ENCODE measurements at regions of chr6 and their contacts with region 1.

Region 1: DNA sequence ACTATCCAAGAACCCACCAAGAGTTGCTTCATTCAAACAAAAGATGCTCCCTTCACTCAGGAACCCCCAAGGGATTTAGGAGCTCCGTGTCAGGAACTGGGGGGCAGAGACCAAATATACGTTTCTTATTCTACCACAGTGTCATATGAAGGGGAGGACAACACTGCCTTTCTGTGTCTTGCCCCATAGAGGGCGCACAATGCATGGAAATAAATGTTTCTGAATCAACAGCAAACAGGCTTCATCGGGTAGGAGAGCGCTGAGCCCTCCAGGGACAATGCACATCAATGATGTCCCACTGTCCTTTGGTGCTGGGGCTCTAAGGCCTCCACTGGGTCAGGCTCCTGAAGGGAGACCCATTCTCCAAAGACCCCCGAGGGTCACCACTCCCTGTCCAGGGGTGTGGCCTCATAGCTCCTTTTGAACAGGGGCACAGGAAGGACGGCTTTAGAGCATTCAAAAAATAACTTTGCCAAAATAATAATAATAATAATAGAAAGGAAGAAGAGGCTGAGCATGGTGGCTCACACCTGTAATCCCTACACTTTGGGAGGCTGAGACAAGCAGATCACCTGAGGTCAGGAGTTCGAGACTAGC is 31.1 kb downstream of the PLG start:
- DNase-seq: peak in 5 of 9 donors; percentile 0 to 15 (median 4)
- ATAC-seq: peak; percentile 31
- H3K4me3 ChIP-seq: no peak overlapping the region
- H3K4me3 Mint-ChIP-seq: no peak overlapping the region
- H3K27ac ChIP-seq: no peak overlapping the region
- H3K27ac Mint-ChIP-seq: no peak overlapping the region
- H3K4me1 ChIP-seq: no peaks in the 10 kb centered on the region
- H3K4me1 Mint-ChIP-seq: no peaks in the 10 kb centered on the region
- H3K27me3 ChIP-seq: no peaks in the 10 kb centered on the region
- H3K27me3 Mint-ChIP-seq: peaks cover 2 to 21% (median 9%) of the 10 kb centered on the region in 5 donors

Region 2: GRCh38 chr6:160766989-160767660 is 34.0 kb after region 1 on chr6:
- CTCF ChIA-PET with region 1: no interaction called
- POLR2A ChIA-PET with region 1: no interaction called
- intact Hi-C with region 1: loop called in 1 of 2 experiments (anchors 1 kb)
- DNase-seq: peak in 7 of 9 donors; percentile 8 to 50 (median 13)
- ATAC-seq: peak; percentile 61
- H3K4me3 ChIP-seq: no peak overlapping the region
- H3K4me3 Mint-ChIP-seq: peak overlapping the region; percentile 15 to 83 (median 63)
- H3K27ac ChIP-seq: no peak overlapping the region
- H3K27ac Mint-ChIP-seq: no peak overlapping the region
- H3K4me1 ChIP-seq: no peaks in the 10 kb centered on the region
- H3K4me1 Mint-ChIP-seq: peaks cover 0 to 9% (median 3%) of the 10 kb centered on the region in 7 donors
- H3K27me3 ChIP-seq: peaks cover 0 to 4% of the 10 kb centered on the region in 2 donors
- H3K27me3 Mint-ChIP-seq: peaks cover 25 to 54% (median 47%) of the 10 kb centered on the region in 5 donors

Region 3: DNA sequence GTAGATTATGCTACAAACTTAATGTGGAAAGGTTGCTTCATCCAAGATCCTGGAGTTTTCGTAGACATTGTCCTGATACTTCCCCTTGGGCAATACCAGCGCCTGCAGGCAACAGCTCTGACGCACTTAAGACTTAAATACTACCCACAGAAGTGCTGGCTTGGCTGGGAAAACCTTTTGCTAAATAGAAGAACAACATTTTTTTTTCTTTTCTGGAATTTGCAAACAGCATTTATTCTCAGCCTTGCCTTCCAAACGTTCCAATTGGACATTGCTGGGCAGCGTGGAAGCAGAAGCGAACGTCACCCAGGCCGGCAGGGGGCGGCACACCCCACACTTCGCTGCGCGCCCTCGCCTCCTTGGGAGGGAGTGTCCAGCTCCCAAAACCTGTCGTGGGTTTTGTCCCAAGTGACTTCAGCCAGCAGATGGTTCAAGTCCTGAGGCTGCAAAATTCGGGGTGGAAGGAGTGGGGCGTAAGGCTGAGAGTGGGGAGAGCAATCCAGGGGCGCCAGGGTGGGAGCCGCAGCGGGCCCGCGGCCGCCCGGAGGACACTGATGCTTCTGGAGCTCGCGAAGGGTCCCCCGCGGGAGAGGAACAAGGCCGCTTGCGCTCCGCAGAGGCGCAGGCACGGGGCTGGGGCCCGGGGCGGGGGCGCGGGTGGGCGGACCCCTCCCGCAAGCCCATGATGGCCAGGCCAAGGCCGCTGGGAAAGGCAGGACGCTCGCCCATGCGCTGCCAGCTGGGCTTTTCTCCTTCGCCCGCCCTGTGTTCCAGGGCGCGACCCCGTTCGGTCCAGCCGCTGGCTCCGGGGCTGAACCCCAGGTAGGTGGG is 197.6 kb after region 1 on chr6:
- CTCF ChIA-PET with region 1: no interaction called
- POLR2A ChIA-PET with region 1: no interaction called
- intact Hi-C with region 1: loop called in 1 of 2 experiments (anchors 5 kb)
- DNase-seq: peak in 8 of 9 donors; percentile 3 to 69 (median 40)
- ATAC-seq: peak; percentile 72
- H3K4me3 ChIP-seq: no peak overlapping the region
- H3K4me3 Mint-ChIP-seq: peak overlapping the region in 7 of 10 donors; percentile 16 to 62 (median 30)
- H3K27ac ChIP-seq: no peak overlapping the region
- H3K27ac Mint-ChIP-seq: no peak overlapping the region
- H3K4me1 ChIP-seq: no peaks in the 10 kb centered on the region
- H3K4me1 Mint-ChIP-seq: peaks cover 0 to 5% (median 0%) of the 10 kb centered on the region in 7 donors
- H3K27me3 ChIP-seq: peaks cover 0 to 5% of the 10 kb centered on the region in 2 donors
- H3K27me3 Mint-ChIP-seq: peaks cover 32 to 50% (median 47%) of the 10 kb centered on the region in 5 donors

Region 4: DNA sequence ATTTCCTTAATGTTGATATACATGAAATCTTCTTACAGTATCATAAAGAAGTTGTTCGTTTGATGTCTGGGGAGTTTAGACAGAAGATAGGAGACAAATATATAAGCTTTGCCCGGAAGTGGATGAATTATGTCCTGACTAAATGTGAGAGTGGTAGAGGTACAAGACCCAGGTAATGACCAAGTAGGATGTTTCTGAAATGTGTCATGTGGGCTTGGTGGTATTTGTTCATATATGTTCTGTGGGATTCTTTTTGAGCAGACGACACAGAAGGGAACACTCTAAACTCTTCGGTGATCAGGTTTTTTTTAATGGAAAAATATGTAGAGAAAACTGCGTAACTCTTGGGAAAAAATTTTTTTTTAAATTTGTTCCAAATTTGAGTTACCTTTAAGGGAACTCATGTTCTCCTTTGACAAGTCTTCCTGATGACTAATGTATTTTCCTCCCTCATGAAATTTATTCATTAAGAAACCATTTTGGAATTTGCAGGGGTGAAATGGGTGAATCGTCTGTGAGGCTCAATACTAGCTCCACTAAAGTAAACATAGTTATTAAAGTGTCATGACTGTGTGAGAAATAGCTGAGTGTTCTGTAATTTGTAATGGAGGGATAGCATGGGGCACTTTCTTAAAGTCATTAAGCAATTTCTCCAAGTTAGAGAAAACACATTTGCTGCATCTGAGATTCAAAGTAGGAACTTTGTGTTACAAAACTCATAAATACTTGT is 359.0 kb after region 1 on chr6:
- CTCF ChIA-PET with region 1: no interaction called
- POLR2A ChIA-PET with region 1: no interaction called
- intact Hi-C with region 1: no loop called
- DNase-seq: no peak
- ATAC-seq: no peak
- H3K4me3 ChIP-seq: no peak overlapping the region
- H3K4me3 Mint-ChIP-seq: no peak overlapping the region
- H3K27ac ChIP-seq: no peak overlapping the region
- H3K27ac Mint-ChIP-seq: peak overlapping the region in 1 of 9 donors; percentile 48
- H3K4me1 ChIP-seq: no peaks in the 10 kb centered on the region
- H3K4me1 Mint-ChIP-seq: no peaks in the 10 kb centered on the region
- H3K27me3 ChIP-seq: no peaks in the 10 kb centered on the region
- H3K27me3 Mint-ChIP-seq: no peaks in the 10 kb centered on the region